ENCODE measurements at regions of chr5 and their contacts with region 1.

Region 1: GRCh38 chr5:91311697-91312501 is 71.2 kb downstream of the ARRDC3 start:
- DNase-seq: peak; percentile 78 to 98
- H3K4me3 ChIP-seq: peak overlapping the region; percentile 82
- H3K27ac ChIP-seq: peak overlapping the region; percentile 99
- H3K4me1 ChIP-seq: peaks cover 38% of the 10 kb centered on the region
- H3K27me3 ChIP-seq: no peaks in the 10 kb centered on the region
- CTCF ChIP-seq: no peak; the same call in 1 of the 2 replicates

Region 2: DNA sequence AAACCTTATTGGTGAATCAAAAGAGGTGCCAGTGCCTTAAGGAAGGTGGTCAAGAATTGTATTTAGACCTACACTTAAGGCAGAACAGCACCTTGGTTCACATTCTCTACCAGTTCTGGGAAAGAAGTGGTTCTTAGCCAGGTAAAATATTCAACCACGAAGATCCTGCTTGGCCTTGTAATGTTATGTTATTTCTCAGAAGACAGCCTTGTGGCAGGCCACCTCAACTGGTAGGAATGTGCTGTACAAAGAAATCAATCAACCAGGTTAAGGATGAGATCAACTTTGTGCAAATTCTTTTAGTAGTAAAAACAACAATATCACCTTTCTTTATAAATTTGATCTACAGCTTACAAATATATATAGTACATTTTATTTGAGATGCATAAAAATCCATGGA is 175.6 kb before region 1 on chr5:
- CTCF ChIA-PET with region 1: no interaction called
- POLR2A ChIA-PET with region 1: no interaction called
- intact Hi-C with region 1: loop called (anchors 5 kb)
- DNase-seq: peak; percentile 38 to 79
- H3K4me3 ChIP-seq: no peak overlapping the region
- H3K27ac ChIP-seq: peak overlapping the region; percentile 52
- H3K4me1 ChIP-seq: peaks cover 42% of the 10 kb centered on the region
- H3K27me3 ChIP-seq: no peaks in the 10 kb centered on the region
- CTCF ChIP-seq: no peak

Region 3: GRCh38 chr5:91225848-91226686 is 85.8 kb before region 1 on chr5:
- CTCF ChIA-PET with region 1: no interaction called
- POLR2A ChIA-PET with region 1: no interaction called
- intact Hi-C with region 1: loop called (anchors 2 kb)
- DNase-seq: peak in 1 of 2 experiments; percentile 46
- H3K4me3 ChIP-seq: no peak overlapping the region
- H3K27ac ChIP-seq: no peak overlapping the region
- H3K4me1 ChIP-seq: no peaks in the 10 kb centered on the region
- H3K27me3 ChIP-seq: no peaks in the 10 kb centered on the region
- CTCF ChIP-seq: peak; percentile 65

Region 4: GRCh38 chr5:91296691-91297143 is 15.2 kb before region 1 on chr5:
- CTCF ChIA-PET with region 1: no interaction called
- POLR2A ChIA-PET with region 1: interaction called, 5 read pairs
- intact Hi-C with region 1: loop called (anchors 1 kb)
- DNase-seq: peak; percentile 84 to 94
- H3K4me3 ChIP-seq: peak overlapping the region; percentile 41; the same call in 1 of the 2 replicates
- H3K27ac ChIP-seq: peak overlapping the region; percentile 94
- H3K4me1 ChIP-seq: peaks cover 64% of the 10 kb centered on the region
- H3K27me3 ChIP-seq: no peaks in the 10 kb centered on the region
- CTCF ChIP-seq: no peak

Region 5: DNA sequence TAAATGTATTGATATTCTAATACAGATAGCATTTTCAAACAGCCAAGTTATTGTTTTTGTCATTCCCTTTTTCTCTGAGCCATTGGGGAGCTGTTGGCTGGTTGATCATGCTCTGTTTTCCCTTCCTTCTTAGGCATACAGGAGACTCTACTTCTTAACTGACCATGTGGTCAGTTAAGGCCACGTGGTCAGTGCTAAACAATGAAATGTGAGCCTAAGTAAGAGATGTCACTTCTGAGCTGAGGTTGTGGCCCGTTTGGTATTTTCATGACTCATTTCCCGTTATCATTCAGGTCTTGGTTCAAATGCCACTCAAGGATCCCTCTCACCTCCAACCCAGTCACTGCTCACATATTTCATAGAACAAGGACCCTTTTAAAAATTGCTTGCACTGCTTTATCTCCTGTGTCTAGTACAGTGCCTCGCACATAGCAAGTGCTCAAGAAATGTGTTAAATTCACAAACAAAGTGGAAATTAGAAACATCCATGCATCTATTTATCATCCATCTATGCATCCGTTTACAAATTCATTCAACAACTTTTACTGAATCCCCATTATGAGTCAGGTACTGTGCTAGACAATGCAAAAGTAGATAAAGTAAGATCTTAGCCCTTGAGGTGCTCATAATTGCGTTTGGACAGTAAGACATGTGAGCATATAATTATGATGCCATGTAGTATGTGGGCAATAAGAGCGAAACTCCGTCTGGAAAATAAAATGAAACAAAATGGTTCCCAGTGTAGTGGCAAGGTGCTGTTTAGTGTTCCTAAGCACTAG is 20.6 kb after region 1 on chr5:
- CTCF ChIA-PET with region 1: no interaction called
- POLR2A ChIA-PET with region 1: interaction called, 7 read pairs
- intact Hi-C with region 1: loop called (anchors 1 kb)
- DNase-seq: peak; percentile 55 to 93
- H3K4me3 ChIP-seq: no peak overlapping the region
- H3K27ac ChIP-seq: peak overlapping the region; percentile 59
- H3K4me1 ChIP-seq: peaks cover 27% of the 10 kb centered on the region
- H3K27me3 ChIP-seq: no peaks in the 10 kb centered on the region
- CTCF ChIP-seq: no peak

Region 6: DNA sequence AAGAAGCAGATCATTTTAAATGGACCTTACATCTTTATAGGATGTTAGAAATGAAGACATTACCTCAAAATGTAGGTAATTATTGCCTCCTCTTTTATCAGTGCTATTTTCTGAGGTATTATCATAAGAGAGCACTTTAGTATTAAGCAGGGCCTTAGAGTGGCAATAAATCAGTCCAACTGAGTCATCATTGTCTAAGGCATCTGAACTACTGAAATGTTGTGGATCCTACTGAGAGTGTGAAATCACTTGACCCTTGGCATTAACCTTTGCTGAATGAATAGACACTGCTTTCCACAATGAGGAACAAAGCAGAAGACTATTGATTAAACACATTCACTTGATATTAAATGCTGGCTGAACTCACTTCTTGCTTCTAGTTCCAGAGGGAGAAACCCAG is 295.8 kb after region 1 on chr5:
- CTCF ChIA-PET with region 1: no interaction called
- POLR2A ChIA-PET with region 1: no interaction called
- intact Hi-C with region 1: no loop called
- DNase-seq: no peak
- H3K4me3 ChIP-seq: no peak overlapping the region
- H3K27ac ChIP-seq: no peak overlapping the region
- H3K4me1 ChIP-seq: no peaks in the 10 kb centered on the region
- H3K27me3 ChIP-seq: no peaks in the 10 kb centered on the region
- CTCF ChIP-seq: no peak

Region 7: DNA sequence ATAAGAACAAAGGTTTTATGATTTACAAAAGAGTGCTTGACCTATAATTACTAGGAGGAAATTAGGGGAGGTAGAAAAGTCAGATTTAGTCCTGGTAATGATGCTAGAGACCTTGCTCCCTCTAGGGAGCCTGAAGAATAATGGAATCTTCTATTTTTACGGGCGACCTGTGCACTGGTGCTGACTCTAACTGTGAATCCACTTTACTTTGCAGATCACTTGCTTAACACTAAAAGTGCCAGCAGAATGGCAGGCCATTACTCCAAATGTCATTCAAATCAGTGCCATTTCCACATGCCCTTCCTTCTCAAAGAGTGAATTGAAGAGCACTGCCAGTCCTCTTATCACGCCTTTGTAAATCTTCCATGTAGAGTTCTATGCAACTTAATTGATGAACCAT is 430.7 kb after region 1 on chr5:
- CTCF ChIA-PET with region 1: no interaction called
- POLR2A ChIA-PET with region 1: no interaction called
- intact Hi-C with region 1: no loop called
- DNase-seq: no peak
- H3K4me3 ChIP-seq: no peak overlapping the region
- H3K27ac ChIP-seq: no peak overlapping the region
- H3K4me1 ChIP-seq: no peaks in the 10 kb centered on the region
- H3K27me3 ChIP-seq: no peaks in the 10 kb centered on the region
- CTCF ChIP-seq: no peak